Transverse colon (tissue), 4 donors: ENCODE measurements at regions of chr2 and their contacts with region 1.

Region 1: DNA sequence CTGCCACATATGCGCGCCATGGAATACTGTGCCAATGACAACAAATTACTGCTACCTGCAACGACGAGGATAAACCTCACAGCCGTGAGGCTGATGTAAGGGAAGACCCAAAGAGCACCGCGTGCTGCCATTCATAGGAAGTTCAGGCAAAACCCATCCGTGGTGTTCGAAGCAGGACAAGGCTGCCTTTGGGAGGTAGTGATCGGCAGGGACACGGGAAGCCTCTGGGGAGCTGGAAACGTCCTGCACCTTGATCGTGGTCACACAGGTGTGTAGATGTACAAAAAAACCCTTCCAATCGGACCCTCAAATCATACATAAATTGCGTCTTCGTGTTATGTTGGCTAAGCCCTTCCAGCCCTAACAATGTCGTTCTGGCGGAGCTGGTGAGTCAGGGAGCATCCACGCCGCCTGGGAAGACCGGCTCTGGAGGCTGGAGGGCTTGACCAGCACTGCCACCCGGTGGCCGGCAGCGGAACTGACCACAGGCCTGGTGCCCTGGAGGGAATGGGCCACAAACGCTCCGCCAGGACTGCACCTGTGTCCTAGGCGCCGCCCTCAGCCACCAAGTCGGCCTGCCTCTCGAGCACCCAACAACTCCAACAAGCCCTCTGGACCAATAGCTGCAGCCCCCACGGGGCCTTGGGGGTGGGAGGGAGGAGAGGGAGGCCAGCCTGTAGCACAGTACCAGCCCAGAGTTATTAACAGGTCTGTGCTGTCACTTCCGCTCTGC is 4.1 kb upstream of the NEURL3 start:
- DNase-seq: peak; percentile 93
- H3K4me3 ChIP-seq: no peak overlapping the region
- H3K27ac ChIP-seq: no peak overlapping the region
- H3K4me1 ChIP-seq: peaks cover 7 to 26% (median 13%) of the 10 kb centered on the region in 4 donors
- H3K27me3 ChIP-seq: no peaks in the 10 kb centered on the region
- CTCF ChIP-seq: peak; percentile 97 to 99 (median 98)
- EP300 ChIP-seq: no peak
- POLR2A ChIP-seq: no peak

Region 2: GRCh38 chr2:96024336-96025193 is 484.7 kb before region 1 on chr2:
- in situ Hi-C with region 1: loop called in 1 of 4 experiments (anchors 25 kb)
- intact Hi-C with region 1: no loop called
- DNase-seq: no peak
- H3K4me3 ChIP-seq: no peak overlapping the region
- H3K27ac ChIP-seq: no peak overlapping the region
- H3K4me1 ChIP-seq: no peaks in the 10 kb centered on the region
- H3K27me3 ChIP-seq: no peaks in the 10 kb centered on the region
- CTCF ChIP-seq: no peak
- EP300 ChIP-seq: no peak
- POLR2A ChIP-seq: no peak

Region 3: DNA sequence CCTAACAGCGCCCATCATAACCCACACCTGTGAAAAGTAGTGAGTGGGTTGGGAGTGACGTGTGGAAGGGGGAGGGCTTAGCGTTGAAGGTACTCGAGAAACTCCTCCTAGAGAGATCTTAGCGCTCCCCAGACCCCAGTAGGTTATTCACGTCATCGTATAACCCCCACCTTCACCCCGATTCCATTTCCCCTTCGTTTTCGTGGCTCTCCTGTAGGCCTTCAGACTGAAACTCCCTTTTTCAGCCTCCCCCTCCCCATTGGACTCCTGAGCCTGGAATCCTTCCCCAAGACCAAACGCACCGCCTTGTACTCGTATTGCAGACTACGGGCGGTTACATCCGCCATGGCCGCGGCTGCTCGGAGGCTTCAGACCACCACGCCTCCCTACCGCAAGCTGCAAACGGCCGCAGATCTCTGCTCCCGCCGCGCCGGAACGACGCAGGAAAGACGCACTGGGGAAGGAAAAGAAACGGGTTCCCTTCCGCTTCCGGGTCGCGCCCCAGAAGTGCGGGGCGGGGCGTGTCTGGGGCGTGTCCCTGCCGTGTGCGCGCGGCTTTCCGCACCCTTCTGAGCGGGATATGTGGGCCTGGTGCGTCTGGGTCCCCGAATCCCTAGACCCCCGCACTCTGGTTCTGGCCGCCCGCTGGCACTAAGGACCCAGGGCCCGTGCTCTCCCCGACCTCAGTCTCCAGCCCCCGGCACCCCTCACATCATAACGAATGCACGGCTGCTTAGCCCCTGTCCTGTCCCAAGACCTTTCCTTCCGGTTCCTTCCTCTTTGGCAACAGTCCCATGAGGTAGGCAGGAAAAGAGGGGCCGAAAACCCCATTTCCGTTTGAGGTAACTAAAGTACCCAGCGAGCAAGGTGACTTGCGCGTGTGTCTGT is 203.9 kb before region 1 on chr2 and contains the start of gene SNRNP200:
- in situ Hi-C with region 1: loop called in 1 of 4 experiments (anchors 25 kb)
- intact Hi-C with region 1: no loop called
- DNase-seq: peak; percentile 93
- H3K4me3 ChIP-seq: peak within 1 kb of the TSS; percentile 52 to 86 (median 77)
- H3K27ac ChIP-seq: peak within 1 kb of the TSS; percentile 88 to 89 (median 88)
- H3K4me1 ChIP-seq: peaks cover 6 to 21% (median 17%) of the 10 kb centered on the region in 4 donors
- H3K27me3 ChIP-seq: no peaks in the 10 kb centered on the region
- CTCF ChIP-seq: no peak
- EP300 ChIP-seq: no peak
- POLR2A ChIP-seq: peak; percentile 86
- total RNA-seq, gene SNRNP200: 81.4 to 106 (median 86.8) TPM

Region 4: GRCh38 chr2:96407041-96407918 is 102.0 kb before region 1 on chr2:
- in situ Hi-C with region 1: loop called in 3 of 4 experiments (anchors 5 to 10 kb)
- intact Hi-C with region 1: loop called (anchors 5 kb)
- DNase-seq: peak; percentile 71
- H3K4me3 ChIP-seq: no peak overlapping the region
- H3K27ac ChIP-seq: no peak overlapping the region
- H3K4me1 ChIP-seq: peaks cover 0 to 16% (median 4%) of the 10 kb centered on the region in 4 donors
- H3K27me3 ChIP-seq: no peaks in the 10 kb centered on the region
- CTCF ChIP-seq: peak; percentile 77 to 85 (median 78)
- EP300 ChIP-seq: no peak
- POLR2A ChIP-seq: no peak

Region 5: DNA sequence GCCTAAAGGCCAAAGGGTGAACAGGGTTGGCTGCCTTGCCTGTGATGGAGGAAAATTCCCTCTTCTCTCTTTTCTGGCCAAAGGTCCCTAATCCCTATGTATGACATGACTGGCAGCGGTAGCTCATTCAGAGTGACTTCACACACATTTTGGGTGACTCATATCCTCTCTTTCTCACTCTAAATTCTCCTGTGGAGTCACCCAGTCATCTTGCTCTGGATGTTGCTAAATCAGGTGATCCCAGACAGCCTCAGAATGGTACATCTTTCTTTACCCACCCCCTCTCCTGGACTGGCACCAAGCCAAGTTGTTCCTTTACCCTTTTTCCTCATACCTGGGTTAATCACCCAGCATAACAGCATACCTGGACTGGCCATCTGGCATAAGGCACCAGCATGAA is 81.4 kb before region 1 on chr2:
- in situ Hi-C with region 1: no loop called
- intact Hi-C with region 1: no loop called
- DNase-seq: no peak
- H3K4me3 ChIP-seq: no peak overlapping the region
- H3K27ac ChIP-seq: no peak overlapping the region
- H3K4me1 ChIP-seq: no peaks in the 10 kb centered on the region
- H3K27me3 ChIP-seq: peaks cover 25% of the 10 kb centered on the region
- CTCF ChIP-seq: no peak
- EP300 ChIP-seq: no peak
- POLR2A ChIP-seq: no peak

Region 6: DNA sequence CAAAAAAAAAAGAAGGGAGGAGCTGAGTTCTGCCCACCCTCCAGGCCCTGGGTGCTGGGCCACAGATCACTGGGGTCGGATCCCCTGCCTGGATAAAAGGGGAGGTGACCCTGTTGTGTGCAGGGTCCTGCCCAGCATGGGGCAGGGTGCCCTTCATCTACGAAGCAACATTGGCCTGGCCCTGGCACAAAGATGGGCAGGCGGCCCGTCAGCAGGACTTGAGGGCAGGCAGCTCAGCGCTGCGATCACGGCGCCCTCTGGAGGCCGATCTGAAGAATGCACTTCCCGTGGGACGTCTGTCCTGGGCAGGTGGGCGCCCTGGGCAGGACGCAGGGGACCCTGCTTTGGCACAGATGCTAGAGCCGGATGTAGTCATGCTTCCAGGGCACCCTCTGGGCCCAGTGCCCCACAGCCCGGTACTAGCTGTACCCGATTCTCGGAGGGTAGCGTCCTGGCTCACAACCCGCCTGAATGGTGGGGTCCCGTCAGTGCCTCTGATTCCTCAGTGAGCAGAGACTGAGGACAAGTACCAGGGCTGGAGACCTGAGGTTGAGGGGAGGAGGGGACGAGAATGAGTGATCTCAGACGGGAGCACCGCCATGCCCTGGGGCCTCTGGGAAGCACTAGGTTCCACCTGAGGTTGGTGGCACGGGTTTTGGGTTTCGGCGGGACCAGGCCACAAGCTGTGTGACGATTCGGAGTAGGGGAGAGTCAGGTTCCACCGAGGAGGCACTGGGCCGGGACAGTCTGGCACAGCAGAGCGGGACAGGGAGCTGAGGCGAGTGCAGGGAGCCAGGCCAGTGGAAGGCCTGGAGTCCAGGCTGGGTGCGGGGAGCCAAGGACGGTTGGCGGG is 45.2 kb after region 1 on chr2:
- in situ Hi-C with region 1: no loop called
- intact Hi-C with region 1: loop called (anchors 5 kb)
- DNase-seq: peak; percentile 71
- H3K4me3 ChIP-seq: no peak overlapping the region
- H3K27ac ChIP-seq: no peak overlapping the region
- H3K4me1 ChIP-seq: peaks cover 0 to 10% (median 6%) of the 10 kb centered on the region in 4 donors
- H3K27me3 ChIP-seq: no peaks in the 10 kb centered on the region
- CTCF ChIP-seq: peak; percentile 88 to 96 (median 95)
- EP300 ChIP-seq: no peak
- POLR2A ChIP-seq: no peak

Region 7: GRCh38 chr2:97617911-97618310 is 1108.6 kb after region 1 on chr2:
- in situ Hi-C with region 1: no loop called
- intact Hi-C with region 1: no loop called
- DNase-seq: no peak
- H3K4me3 ChIP-seq: no peak overlapping the region
- H3K27ac ChIP-seq: no peak overlapping the region
- H3K4me1 ChIP-seq: no peaks in the 10 kb centered on the region
- H3K27me3 ChIP-seq: no peaks in the 10 kb centered on the region
- CTCF ChIP-seq: no peak
- EP300 ChIP-seq: no peak
- POLR2A ChIP-seq: no peak